ENCODE measurements at regions of chr12 and their contacts with region 1.

Region 1: DNA sequence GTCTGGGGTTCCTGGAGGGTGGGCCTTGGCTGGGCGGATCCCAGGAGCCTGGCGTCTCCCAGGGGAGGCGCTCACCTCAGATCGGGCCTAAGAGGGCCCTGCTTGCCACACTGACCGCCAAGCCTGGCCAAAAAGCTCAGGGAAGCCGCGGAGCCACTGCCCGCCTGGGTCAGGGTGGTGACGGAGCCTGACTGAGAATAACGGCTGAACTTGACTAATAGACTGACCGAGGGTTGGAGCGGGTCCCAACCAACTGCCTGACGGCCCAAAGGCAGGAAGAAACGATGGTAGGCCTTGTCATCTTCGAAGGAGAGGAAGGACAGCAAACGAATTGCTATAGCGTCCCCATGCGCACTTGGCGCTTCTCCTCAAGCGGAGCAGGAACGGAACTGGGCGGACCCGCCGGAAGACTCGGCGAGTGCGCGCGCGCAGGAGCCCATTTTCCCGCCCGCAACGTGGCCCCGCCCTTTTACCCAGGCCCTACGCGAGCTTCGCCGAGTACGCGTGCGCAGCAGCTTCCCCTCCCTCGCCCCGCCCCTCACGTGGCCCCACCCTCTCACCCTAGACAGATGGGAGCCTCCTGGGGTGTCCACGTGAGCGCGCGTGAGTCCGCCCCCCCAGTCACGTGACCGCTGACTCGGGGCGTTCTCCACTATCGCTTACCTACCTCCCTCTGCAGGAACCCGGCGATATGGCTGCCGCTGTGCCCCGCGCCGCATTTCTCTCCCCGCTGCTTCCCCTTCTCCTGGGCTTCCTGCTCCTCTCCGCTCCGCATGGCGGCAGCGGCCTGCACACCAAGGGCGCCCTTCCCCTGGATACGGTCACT is at the starts of genes ERP29 and TMEM116:
- DNase-seq: peak; percentile 97 to 100
- H3K4me3 ChIP-seq: peak within 1 kb of the TSS; percentile 77 to 96 (median 89)
- H3K27ac ChIP-seq: peak within 1 kb of the TSS; percentile 93
- H3K4me1 ChIP-seq: peaks cover 4 to 13% (median 5%) of the 10 kb centered on the region in 4 experiments
- H3K27me3 ChIP-seq: no peaks in the 10 kb centered on the region
- CTCF ChIP-seq: peak; percentile 37 to 62 (median 50)
- EP300 ChIP-seq: peak in 1 of 2 experiments; percentile 36; a peak in 1 of 3 replicates
- POLR2A ChIP-seq: peak; percentile 95 to 98
- RAD21 ChIP-seq: peak; percentile 45 to 54; a peak in 3 of 4 replicates
- total RNA-seq, gene ERP29: 168 and 171 TPM in 2 replicates
- total RNA-seq, gene TMEM116: 8.1 and 8.9 TPM in 2 replicates

Region 2: GRCh38 chr12:111841750-111842555 is 171.0 kb before region 1 on chr12 and contains the start of gene MAPKAPK5:
- CTCF ChIA-PET with region 1: interaction called, 3 read pairs
- POLR2A ChIA-PET with region 1: interaction called, 12 read pairs
- DNase-seq: peak; percentile 86 to 98
- H3K4me3 ChIP-seq: peak within 1 kb of the TSS; percentile 75 to 94 (median 86)
- H3K27ac ChIP-seq: peak within 1 kb of the TSS; percentile 99
- H3K4me1 ChIP-seq: no peaks in the 10 kb centered on the region; a peak in 2 of 7 replicates
- H3K27me3 ChIP-seq: no peaks in the 10 kb centered on the region
- CTCF ChIP-seq: no peak
- EP300 ChIP-seq: peak in 1 of 2 experiments; percentile 38; a peak in 1 of 3 replicates
- POLR2A ChIP-seq: peak; percentile 79 to 82
- RAD21 ChIP-seq: no peak
- total RNA-seq, gene MAPKAPK5: 90.8 and 91.5 TPM in 2 replicates

Region 3: DNA sequence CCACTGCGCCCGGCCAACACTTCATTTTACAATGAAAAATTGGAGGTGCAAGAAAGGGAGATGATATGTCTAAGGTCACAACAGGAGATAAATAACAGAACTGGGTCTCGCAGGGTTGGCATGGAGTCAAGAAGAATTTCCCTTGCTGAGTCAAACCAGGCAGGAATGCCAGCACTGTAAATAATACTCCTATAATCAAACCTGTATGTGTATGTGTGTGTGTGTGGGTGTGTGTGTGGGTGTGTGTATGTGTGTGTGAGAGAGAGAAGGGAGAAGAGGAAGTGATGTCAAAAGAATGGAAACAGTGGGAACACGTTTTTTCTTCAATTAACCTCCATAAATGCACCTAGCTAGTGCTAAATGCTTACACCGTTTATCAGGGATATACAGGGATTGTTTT is 70.4 kb before region 1 on chr12:
- CTCF ChIA-PET with region 1: interaction called, 21 read pairs
- POLR2A ChIA-PET with region 1: interaction called, 22 read pairs
- DNase-seq: no peak
- H3K4me3 ChIP-seq: no peak overlapping the region
- H3K27ac ChIP-seq: no peak overlapping the region
- H3K4me1 ChIP-seq: no peaks in the 10 kb centered on the region
- H3K27me3 ChIP-seq: no peaks in the 10 kb centered on the region
- CTCF ChIP-seq: no peak
- EP300 ChIP-seq: no peak
- POLR2A ChIP-seq: no peak
- RAD21 ChIP-seq: no peak

Region 4: DNA sequence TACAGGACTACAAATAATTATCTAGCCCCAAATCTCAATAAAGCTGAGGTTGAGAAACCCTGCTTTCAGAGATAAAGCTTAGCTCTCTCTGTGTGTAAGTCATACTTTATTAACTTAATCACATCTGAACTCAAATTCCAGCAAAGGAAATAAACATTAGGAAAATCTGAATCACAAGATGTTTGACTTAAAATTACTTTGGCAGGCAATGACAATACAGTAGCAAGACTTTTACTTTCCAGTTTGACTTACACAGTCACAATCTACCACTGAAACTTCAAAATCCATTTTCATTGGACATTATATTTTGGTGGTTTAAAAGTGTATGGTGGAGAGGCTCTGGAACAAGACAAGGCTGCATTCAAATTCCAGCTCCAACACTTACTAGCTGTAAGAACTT is 11.4 kb before region 1 on chr12:
- CTCF ChIA-PET with region 1: interaction called, 6 read pairs
- POLR2A ChIA-PET with region 1: interaction called, 32 read pairs
- DNase-seq: no peak
- H3K4me3 ChIP-seq: no peak overlapping the region
- H3K27ac ChIP-seq: no peak overlapping the region
- H3K4me1 ChIP-seq: no peaks in the 10 kb centered on the region
- H3K27me3 ChIP-seq: no peaks in the 10 kb centered on the region
- CTCF ChIP-seq: no peak
- EP300 ChIP-seq: no peak
- POLR2A ChIP-seq: no peak
- RAD21 ChIP-seq: no peak

Region 5: DNA sequence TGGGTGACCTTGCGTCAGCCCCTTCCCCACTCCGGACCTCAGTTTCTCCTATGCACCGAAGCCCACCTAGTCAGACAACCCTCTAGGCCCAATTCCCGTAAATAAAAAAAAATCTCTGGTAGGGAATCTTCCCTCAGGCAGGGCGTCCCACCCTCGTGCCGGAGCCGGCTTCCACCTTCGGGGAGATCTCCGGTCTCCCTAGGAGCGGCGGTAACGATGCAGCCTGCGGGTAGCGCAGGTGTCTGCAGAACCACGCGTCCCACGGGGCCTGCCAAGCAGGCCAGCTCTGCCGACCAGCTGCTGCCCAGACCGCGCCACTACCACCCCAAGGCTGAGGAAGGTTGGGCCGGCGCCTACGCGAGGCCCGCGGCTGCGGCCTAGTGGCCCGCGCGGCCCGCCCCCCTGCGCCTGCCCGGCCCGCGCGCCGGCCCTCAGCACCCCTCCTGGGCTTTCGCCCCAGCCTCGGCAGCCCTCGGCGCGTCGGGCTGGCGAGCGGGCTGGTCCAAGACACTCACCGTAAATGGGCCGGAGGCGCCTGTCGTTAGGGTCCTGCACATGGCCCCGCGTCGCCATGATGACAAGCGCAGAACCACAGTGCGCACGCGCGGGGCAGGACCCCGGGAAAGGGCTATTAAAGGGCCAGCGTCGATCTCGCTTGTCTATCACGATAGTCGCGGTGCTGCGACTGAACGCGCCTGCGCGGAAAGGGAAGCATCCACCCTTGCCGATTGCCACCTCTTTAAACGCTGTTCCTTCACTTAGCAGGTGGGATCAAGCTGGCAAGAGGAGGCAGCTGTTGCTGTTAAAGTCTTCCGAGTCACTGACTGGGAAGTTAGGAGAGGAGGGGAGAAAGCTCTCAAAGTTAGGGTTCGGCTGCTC is 95.5 kb after region 1 on chr12 and contains the start of gene NAA25:
- CTCF ChIA-PET with region 1: interaction called, 4 read pairs
- POLR2A ChIA-PET with region 1: interaction called, 12 read pairs
- DNase-seq: peak; percentile 80 to 96
- H3K4me3 ChIP-seq: peak within 1 kb of the TSS; percentile 82 to 98 (median 88)
- H3K27ac ChIP-seq: peak within 1 kb of the TSS; percentile 85
- H3K4me1 ChIP-seq: peaks cover 10 to 21% (median 17%) of the 10 kb centered on the region in 4 experiments; a peak in 6 of 7 replicates
- H3K27me3 ChIP-seq: no peaks in the 10 kb centered on the region
- CTCF ChIP-seq: no peak
- EP300 ChIP-seq: no peak
- POLR2A ChIP-seq: peak; percentile 62 to 80; a peak in 1 of 3 replicates
- RAD21 ChIP-seq: no peak
- total RNA-seq, gene NAA25: 53.4 and 60.3 TPM in 2 replicates

Region 6: DNA sequence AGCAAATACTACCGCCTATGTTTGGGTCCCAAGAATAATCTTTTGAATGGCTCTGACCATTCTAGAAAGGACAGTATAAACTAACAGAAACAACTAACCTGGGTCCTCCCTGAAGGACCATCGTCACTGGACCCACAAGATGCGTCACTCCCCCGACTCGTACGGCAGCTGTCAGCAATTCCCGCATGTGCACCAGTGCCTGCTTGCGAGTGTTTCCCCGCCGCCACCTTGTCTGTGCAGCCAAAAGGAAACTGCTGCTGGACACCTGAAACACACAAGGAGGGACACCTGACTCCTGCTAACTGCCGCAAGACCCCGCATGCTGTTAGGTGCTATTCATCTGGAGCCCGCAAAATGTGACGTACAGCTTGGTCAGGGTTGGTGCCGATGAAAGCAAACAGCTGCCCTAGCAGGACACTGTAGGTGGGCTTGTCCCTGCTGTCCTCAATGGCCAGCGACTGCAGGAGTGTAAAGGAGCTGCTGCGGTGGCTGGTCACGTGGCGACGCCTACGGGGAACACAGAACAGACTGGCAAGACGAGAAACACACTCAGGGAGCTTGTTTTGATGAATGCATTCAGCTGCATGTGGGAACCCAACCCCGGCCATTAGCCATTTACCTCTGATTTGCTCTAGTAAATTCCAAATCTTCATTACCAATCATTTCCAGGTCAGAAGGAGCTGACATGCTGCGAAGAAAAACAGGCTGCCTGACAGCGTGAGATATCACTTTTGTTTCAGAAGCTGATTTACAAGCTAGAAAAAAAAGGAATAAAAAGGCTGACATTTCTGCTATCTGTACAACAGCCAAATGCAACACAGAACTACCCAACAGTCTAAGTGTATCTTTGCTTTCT is 230.5 kb after region 1 on chr12:
- CTCF ChIA-PET with region 1: no interaction called
- POLR2A ChIA-PET with region 1: no interaction called
- DNase-seq: no peak
- H3K4me3 ChIP-seq: no peak overlapping the region
- H3K27ac ChIP-seq: no peak overlapping the region
- H3K4me1 ChIP-seq: no peaks in the 10 kb centered on the region
- H3K27me3 ChIP-seq: no peaks in the 10 kb centered on the region
- CTCF ChIP-seq: no peak
- EP300 ChIP-seq: no peak
- POLR2A ChIP-seq: no peak
- RAD21 ChIP-seq: no peak

Measured in H1 (cell line).